WTC11 (cell line): ENCODE measurements at regions of chr1 and their contacts with region 1.

Region 1: DNA sequence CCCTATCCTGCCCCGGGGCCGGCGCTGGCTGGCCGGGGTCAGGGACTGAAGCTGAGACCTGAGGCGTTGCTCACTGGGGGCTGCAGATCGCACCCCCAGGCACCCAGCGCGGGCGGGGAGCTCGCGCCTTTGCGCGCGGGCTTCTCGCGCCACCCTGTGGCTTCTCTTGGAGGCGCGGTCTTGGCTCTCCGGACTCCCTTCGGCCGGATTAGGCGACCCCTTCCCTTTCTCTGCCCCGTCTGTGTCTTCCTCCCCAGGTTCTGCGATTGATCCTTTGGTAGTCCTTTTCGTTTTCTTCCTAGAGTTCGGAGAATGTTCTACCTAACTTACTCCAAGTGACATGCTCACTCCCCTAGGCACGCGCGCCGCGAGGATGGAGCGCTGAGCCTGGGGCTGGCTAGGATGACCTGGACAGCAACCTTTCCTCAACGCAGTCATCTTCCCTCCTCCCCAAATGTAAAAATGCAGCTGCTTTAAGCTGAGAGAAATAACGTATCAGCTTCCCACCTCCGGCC is 495 bp upstream of the NTRK1 start:
- DNase-seq: peak; percentile 76
- ATAC-seq: peak; percentile 63
- H3K4me3 Mint-ChIP-seq: peak overlapping the region; percentile 89
- H3K27ac Mint-ChIP-seq: no peak overlapping the region
- H3K4me1 Mint-ChIP-seq: peaks cover 10% of the 10 kb centered on the region
- H3K27me3 Mint-ChIP-seq: peaks cover 92% of the 10 kb centered on the region
- CTCF ChIP-seq: peak; percentile 53

Region 2: DNA sequence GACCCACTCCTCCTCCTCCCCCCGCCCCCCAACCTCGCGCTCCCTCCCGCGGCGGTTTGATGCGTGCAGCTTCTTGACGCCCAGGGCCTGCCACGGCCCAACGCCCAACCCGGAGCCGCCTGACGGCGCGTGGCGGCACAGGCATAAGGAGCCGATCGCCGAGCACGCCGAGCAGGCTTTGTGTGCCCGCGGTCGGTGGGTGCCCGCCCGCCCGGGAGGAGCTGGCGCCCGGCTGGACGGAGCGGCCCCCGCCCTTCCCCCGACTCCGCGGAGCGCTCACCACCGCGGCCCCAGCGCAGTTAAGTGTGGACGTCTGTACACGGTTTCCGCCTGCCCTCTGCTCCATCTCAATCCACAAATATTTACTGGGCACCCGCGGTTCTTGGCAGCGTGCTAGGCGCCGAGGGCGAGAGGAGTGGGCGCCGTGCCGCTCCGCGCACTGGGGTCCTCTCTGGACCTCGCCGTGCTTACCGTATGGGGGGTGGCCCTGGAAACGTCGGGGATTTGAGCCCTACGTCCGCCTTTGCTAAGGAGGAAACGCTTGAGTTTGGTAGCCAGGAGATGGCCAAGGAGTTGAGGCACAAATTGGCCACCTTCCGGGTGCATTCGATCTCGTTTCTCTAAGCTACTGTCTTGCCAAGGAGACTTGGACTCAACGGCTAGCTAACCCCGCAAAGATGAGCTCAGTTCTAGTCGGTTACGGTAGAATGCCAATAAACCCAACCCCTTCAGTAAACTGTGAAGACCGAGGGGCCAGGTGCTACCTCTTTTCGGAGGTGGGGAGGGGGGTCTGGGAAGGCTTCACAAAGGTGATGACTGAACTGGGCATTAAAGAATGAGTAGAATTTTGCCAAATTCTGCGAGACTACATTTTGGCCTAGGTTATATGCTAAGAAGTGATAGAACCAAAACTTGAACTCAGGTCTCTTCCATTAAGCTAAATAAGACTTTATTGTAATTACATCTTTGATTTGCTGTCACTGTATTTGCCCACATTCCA is 108.1 kb before region 1 on chr1:
- CTCF ChIA-PET with region 1: interaction called, 10 read pairs
- POLR2A ChIA-PET with region 1: no interaction called
- DNase-seq: peak; percentile 97
- ATAC-seq: peak; percentile 67
- H3K4me3 Mint-ChIP-seq: peak overlapping the region; percentile 96
- H3K27ac Mint-ChIP-seq: peak overlapping the region; percentile 97
- H3K4me1 Mint-ChIP-seq: peaks cover 43% of the 10 kb centered on the region
- H3K27me3 Mint-ChIP-seq: no peaks in the 10 kb centered on the region
- CTCF ChIP-seq: no peak

Region 3: GRCh38 chr1:156813750-156814570 is 46.2 kb before region 1 on chr1:
- CTCF ChIA-PET with region 1: interaction called, 36 read pairs
- POLR2A ChIA-PET with region 1: interaction called, 6 read pairs
- DNase-seq: peak; percentile 87
- ATAC-seq: peak; percentile 88
- H3K4me3 Mint-ChIP-seq: peak overlapping the region; percentile 62
- H3K27ac Mint-ChIP-seq: no peak overlapping the region
- H3K4me1 Mint-ChIP-seq: peaks cover 22% of the 10 kb centered on the region
- H3K27me3 Mint-ChIP-seq: peaks cover 59% of the 10 kb centered on the region
- CTCF ChIP-seq: no peak

Region 4: DNA sequence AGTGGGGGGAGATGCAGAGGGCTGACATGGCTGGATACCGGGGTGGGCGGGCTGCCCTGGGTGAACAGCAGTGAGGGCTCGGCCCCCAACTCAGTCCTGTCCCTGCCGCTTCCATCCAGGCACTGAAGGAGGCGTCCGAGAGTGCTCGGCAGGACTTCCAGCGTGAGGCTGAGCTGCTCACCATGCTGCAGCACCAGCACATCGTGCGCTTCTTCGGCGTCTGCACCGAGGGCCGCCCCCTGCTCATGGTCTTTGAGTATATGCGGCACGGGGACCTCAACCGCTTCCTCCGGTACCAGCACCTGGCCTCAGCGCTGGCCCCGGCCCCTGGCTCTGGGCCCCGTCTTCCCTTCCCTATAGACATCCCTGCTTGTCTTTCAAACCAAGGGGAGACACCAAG is 16.1 kb after region 1 on chr1:
- CTCF ChIA-PET with region 1: interaction called, 47 read pairs
- POLR2A ChIA-PET with region 1: no interaction called
- DNase-seq: peak; percentile 76
- ATAC-seq: peak; percentile 96
- H3K4me3 Mint-ChIP-seq: peak overlapping the region; percentile 13; the same call in 1 of the 2 replicates
- H3K27ac Mint-ChIP-seq: no peak overlapping the region
- H3K4me1 Mint-ChIP-seq: peaks cover 4% of the 10 kb centered on the region
- H3K27me3 Mint-ChIP-seq: peaks cover 32% of the 10 kb centered on the region
- CTCF ChIP-seq: 0 out of 2 replicates have a peak, but pooled peaks have one; percentile 17

Region 5: DNA sequence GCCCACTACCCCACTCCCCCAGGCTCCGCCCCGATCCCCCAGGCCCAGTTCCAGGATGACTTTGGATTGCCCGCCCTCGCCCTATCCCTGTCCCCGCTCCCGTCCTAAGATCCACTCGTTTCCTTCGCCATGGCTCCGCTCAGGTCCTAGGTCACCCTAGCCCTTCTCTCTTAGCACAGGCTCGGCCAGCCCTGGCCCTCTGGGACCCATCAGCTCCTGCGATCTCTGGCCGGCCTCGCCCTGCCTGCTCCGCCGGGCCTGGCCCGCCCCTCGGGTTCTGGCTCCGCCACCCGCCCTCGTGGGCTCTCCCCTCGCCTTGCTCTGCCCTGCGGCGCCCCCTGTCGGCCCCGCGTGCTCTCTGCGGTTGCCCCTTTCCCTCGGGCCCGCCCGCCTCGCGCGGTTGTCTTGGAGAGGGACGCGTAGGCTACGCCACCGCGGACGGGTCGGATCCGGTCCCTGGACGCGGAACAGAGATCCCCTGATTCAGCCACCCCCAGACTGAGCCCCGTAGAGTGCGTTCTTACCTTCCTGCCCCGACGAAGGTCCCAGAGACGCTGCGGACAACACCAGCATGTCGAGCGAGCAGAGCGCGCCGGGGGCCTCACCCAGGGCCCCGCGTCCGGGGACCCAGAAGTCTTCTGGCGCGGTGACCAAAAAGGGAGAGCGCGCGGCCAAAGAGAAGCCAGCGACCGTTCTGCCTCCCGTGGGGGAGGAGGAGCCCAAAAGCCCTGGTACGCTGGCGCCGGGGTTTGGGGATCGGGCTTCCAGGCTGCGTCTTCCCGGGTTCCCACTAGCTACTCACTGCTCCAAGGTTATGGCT is 60.3 kb after region 1 on chr1 and contains the start of gene LRRC71:
- CTCF ChIA-PET with region 1: interaction called, 35 read pairs
- POLR2A ChIA-PET with region 1: no interaction called
- DNase-seq: peak; percentile 94
- ATAC-seq: peak; percentile 89
- H3K4me3 Mint-ChIP-seq: peak within 1 kb of the TSS; percentile 67
- H3K27ac Mint-ChIP-seq: no peak within 1 kb of the TSS
- H3K4me1 Mint-ChIP-seq: peaks cover 15% of the 10 kb centered on the region
- H3K27me3 Mint-ChIP-seq: peaks cover 96% of the 10 kb centered on the region
- CTCF ChIP-seq: peak; percentile 94
- total RNA-seq, gene LRRC71: 0.18 to 0.30 TPM (median 0.22 TPM) in 3 replicates